GM10248 (cell line): ENCODE measurements at regions of chr9 and their contacts with region 1.

Region 1: DNA sequence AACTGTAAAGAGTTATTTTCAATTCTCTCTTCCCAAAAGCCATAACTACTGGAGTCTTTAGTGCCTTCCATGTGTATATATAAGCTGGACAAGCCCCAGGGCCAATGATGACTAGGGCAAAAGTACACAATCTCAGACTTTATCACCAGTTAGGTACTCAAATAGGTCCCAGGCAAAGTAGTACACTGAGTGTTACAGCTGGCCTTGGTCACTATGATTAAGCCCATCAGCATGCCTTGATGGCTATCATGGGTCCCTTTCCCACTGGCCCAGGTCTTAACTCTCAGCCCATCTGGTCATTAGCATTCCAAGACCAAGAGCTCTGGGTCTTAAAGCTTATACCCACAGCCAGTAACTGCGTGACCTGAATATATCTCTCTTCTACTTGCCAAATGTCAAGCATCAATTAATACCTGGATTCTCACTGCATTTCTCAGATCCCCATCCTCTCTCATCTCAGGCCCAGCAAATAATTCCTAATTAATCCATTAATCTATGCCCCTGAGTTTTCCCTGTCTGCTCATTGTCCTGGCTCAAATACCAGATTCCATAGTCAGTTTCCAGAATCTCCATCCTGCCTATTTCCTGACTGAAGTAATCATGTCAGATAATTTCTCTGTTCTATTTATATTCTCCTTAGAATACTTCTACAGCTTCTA is 62.3 kb downstream of the NR6A1 start:
- DNase-seq: no peak
- CTCF ChIP-seq: no peak

Region 2: DNA sequence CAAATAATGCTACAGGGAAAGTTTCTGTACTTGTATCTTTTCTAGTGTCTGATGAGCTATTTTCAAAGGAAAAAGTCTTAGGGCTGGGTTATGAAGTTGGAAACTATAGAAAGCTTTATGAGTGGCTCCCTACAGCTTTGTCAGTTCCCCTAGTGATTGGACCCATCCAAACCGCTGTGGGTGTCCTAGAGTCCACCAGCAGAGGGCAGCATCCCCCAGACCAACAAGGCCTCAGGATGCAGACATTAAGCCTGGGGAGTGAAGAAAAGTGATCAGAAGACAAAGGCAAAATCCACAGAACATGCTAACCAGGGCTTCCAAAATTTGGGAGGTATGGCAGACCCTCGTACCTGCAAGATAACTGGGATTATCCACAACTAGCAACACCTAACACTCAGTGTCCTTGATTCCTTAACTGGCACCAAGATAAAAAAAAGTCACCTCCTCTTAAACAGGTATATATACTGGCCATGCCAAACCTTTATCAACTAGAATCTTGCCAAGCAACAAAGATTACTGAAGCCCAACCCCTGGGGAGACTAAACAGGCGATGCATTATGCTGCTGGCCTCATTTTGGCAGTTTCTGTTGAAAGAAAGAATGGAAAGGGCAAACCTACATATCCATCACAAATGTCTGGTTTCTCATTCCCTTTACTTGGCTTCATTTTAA is 91.2 kb before region 1 on chr9:
- CTCF ChIA-PET with region 1: interaction called, 163 read pairs
- POLR2A ChIA-PET with region 1: no interaction called
- DNase-seq: peak; percentile 72
- CTCF ChIP-seq: peak; percentile 90

Region 3: DNA sequence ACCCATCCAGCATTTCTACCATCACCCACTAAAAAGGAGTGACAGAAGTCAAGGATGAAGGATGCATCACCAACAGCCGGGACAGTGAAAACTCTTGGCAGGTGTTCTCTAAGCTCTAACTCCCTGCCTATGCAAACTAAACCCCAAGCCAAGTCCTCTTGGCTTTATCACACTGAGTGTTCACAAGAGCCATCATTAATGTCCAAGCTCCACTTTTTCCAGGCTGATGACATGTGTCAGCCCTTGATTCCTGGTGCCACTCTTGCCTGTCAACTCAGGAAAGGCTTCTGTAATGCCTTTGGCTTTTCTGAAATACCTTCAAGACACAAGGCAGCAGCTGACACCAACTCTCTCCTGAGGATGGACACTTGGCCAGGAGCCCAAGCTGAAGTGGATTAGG is 24.6 kb before region 1 on chr9:
- CTCF ChIA-PET with region 1: interaction called, 27 read pairs
- POLR2A ChIA-PET with region 1: no interaction called
- DNase-seq: no peak
- CTCF ChIP-seq: no peak

Region 4: DNA sequence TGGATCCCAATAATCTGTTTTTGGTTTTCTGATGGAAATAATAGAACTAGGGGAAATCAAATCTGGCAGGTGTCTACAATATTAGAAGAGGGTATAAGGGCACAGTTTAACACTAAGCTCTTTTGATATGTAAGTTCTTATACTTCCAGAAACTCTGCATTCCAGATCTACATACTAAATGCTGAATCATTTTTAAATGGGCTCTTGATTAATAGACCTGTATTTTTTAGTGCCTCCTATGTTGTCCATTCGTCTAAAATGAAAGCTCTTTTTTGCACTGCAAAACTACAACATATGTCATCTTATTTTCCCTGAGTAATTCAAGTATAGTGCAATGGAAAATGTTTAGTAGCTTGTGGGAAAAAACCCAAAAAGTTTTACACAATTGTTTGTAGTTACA is 18.1 kb after region 1 on chr9:
- CTCF ChIA-PET with region 1: interaction called, 18 read pairs
- POLR2A ChIA-PET with region 1: no interaction called
- DNase-seq: no peak
- CTCF ChIP-seq: no peak

Region 5: GRCh38 chr9:124764774-124765438 is 56.1 kb after region 1 on chr9:
- CTCF ChIA-PET with region 1: interaction called, 29 read pairs
- POLR2A ChIA-PET with region 1: no interaction called
- DNase-seq: peak; percentile 52
- CTCF ChIP-seq: peak; percentile 24